Endothelial cell of umbilical vein (primary cell): ENCODE measurements at regions of chr7 and their contacts with region 1.

Region 1: DNA sequence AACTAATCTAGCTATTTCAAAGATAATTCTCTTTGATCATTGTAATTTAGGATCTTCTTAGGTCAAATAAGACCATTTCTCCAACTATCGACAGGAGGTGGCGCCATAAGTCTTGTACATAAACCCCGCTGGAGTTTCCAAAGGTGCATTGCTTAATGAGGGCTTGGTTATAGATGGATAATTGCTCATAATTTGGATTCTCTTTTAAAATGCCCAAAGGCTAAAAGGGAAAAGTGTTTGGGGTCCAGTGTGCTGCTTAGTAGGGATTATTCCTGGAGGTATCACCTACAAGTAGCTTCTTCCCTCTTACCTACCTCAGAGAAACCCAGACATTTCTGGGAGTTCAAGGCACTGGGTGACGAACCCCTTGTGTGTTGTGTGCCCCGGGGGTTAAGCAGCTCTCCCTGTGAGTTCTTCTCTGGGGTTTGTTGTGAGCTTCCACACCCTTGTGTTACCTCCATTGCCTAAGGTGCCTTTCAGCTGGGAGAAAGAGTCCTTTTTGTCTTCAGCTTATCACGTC is 75.2 kb downstream of the PAXIP1 start:
- DNase-seq: peak; percentile 86
- H3K4me3 ChIP-seq: peak overlapping the region; percentile 45 to 91 (median 89)
- H3K27ac ChIP-seq: peak overlapping the region; percentile 49
- H3K4me1 ChIP-seq: peaks cover 8% of the 10 kb centered on the region
- H3K27me3 ChIP-seq: peaks cover 0 to 5% of the 10 kb centered on the region in 2 experiments
- CTCF ChIP-seq: peak; percentile 45 to 53
- POLR2A ChIP-seq: no peak

Region 2: GRCh38 chr7:154953006-154953684 is 25.5 kb after region 1 on chr7:
- CTCF ChIA-PET with region 1: interaction called, 57 read pairs
- POLR2A ChIA-PET with region 1: no interaction called
- dilution Hi-C with region 1: no loop called
- intact Hi-C with region 1: loop called (anchors 1 kb)
- DNase-seq: peak; percentile 72
- H3K4me3 ChIP-seq: no peak overlapping the region
- H3K27ac ChIP-seq: no peak overlapping the region
- H3K4me1 ChIP-seq: no peaks in the 10 kb centered on the region
- H3K27me3 ChIP-seq: no peaks in the 10 kb centered on the region
- CTCF ChIP-seq: peak; percentile 78 to 80
- POLR2A ChIP-seq: no peak

Region 3: DNA sequence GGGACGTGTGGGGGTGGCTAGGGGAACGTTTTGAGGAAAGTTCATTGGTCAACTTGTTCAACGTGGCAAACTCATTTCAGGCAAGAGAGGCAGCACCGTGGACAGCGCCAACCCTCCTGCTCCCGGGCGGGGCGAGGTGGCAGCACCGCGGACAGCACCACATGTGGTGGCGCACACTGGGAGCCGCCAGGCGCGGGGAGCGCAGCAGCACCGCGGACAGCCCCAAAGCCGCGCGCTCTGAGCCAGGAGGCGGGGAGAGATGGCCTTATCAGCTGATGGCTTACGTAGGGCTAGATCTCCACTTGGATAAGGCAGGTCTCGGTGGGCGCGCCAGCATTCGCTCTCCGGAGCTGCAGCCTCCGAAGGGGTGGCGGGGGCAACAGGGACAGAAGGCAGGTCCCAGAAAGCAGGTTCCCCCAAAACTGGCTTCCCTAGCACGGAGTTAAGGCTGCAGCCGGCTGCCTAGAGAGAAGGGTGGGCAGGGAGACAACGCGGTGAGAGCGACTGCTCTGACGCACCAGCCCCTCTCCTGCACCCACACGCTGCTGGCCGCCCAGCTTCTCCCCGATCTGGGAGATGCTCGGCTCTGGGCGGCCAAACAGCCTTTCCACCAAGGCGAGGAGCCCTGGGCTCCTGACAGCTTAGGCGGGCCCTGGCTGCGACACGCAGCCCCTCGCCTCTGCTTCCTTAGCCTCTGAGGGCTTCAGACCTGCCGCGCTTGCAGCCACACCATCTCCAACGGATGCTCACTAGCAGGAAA is 142.5 kb after region 1 on chr7 and contains the start of gene HTR5A:
- CTCF ChIA-PET with region 1: no interaction called
- POLR2A ChIA-PET with region 1: no interaction called
- dilution Hi-C with region 1: no loop called
- intact Hi-C with region 1: loop called (anchors 1 kb)
- DNase-seq: peak; percentile 85
- H3K4me3 ChIP-seq: no peak within 1 kb of the TSS
- H3K27ac ChIP-seq: no peak within 1 kb of the TSS
- H3K4me1 ChIP-seq: no peaks in the 10 kb centered on the region
- H3K27me3 ChIP-seq: no peaks in the 10 kb centered on the region
- CTCF ChIP-seq: no peak
- POLR2A ChIP-seq: no peak
- total RNA-seq, gene HTR5A: not detected in 2 replicates

Region 4: GRCh38 chr7:155178096-155178495 is 250.4 kb after region 1 on chr7:
- CTCF ChIA-PET with region 1: no interaction called
- POLR2A ChIA-PET with region 1: no interaction called
- dilution Hi-C with region 1: no loop called
- intact Hi-C with region 1: no loop called
- DNase-seq: no peak
- H3K4me3 ChIP-seq: no peak overlapping the region
- H3K27ac ChIP-seq: no peak overlapping the region
- H3K4me1 ChIP-seq: no peaks in the 10 kb centered on the region
- H3K27me3 ChIP-seq: no peaks in the 10 kb centered on the region
- CTCF ChIP-seq: no peak
- POLR2A ChIP-seq: no peak

Region 5: GRCh38 chr7:155205368-155206317 is 278.0 kb after region 1 on chr7:
- CTCF ChIA-PET with region 1: interaction called, 11 read pairs
- POLR2A ChIA-PET with region 1: no interaction called
- dilution Hi-C with region 1: no loop called
- intact Hi-C with region 1: loop called (anchors 1 kb)
- DNase-seq: peak; percentile 97
- H3K4me3 ChIP-seq: peak overlapping the region; percentile 25 to 78 (median 51)
- H3K27ac ChIP-seq: peak overlapping the region; percentile 99
- H3K4me1 ChIP-seq: peaks cover 29% of the 10 kb centered on the region
- H3K27me3 ChIP-seq: no peaks in the 10 kb centered on the region
- CTCF ChIP-seq: no peak
- POLR2A ChIP-seq: peak; percentile 67

Region 6: GRCh38 chr7:155344600-155345433 is 417.1 kb after region 1 on chr7:
- CTCF ChIA-PET with region 1: interaction called, 40 read pairs
- POLR2A ChIA-PET with region 1: no interaction called
- dilution Hi-C with region 1: no loop called
- intact Hi-C with region 1: loop called (anchors 1 kb)
- DNase-seq: peak; percentile 70
- H3K4me3 ChIP-seq: peak overlapping the region in 1 of 3 experiments; percentile 14
- H3K27ac ChIP-seq: no peak overlapping the region
- H3K4me1 ChIP-seq: no peaks in the 10 kb centered on the region
- H3K27me3 ChIP-seq: peaks cover 2 to 3% of the 10 kb centered on the region in 2 experiments
- CTCF ChIP-seq: peak; percentile 79 to 82
- POLR2A ChIP-seq: no peak

Region 7: GRCh38 chr7:155533827-155534690 is 606.4 kb after region 1 on chr7:
- CTCF ChIA-PET with region 1: interaction called, 7 read pairs
- POLR2A ChIA-PET with region 1: no interaction called
- dilution Hi-C with region 1: no loop called
- intact Hi-C with region 1: loop called (anchors 5 kb)
- DNase-seq: peak; percentile 20
- H3K4me3 ChIP-seq: no peak overlapping the region
- H3K27ac ChIP-seq: no peak overlapping the region
- H3K4me1 ChIP-seq: no peaks in the 10 kb centered on the region
- H3K27me3 ChIP-seq: peaks cover 28 to 31% of the 10 kb centered on the region in 2 experiments
- CTCF ChIP-seq: peak; percentile 41 to 80
- POLR2A ChIP-seq: no peak